K562 (cell line): ENCODE measurements at regions of chr4 and their contacts with region 1.

Region 1: GRCh38 chr4:140523857-140524742 is at the start of gene ELMOD2:
- DNase-seq: peak; percentile 97 to 98 (median 98)
- ATAC-seq: peak; percentile 100
- H3K4me3 ChIP-seq: peak within 1 kb of the TSS; percentile 96
- H3K27ac ChIP-seq: peak within 1 kb of the TSS; percentile 84
- H3K4me1 ChIP-seq: peaks cover 5 to 7% of the 10 kb centered on the region in 2 experiments; a peak in 3 of 5 replicates
- H3K27me3 ChIP-seq: no peaks in the 10 kb centered on the region
- CTCF ChIP-seq: peak; percentile 80 to 94 (median 87)
- EP300 ChIP-seq: no peak; the same call in 1 of the 2 replicates
- POLR2A ChIP-seq: peak; percentile 92
- RAD21 ChIP-seq: peak; percentile 33 to 37; a peak in 3 of 4 replicates
- polyA plus RNA-seq, gene ELMOD2: 11.0 to 13.1 TPM

Region 2: DNA sequence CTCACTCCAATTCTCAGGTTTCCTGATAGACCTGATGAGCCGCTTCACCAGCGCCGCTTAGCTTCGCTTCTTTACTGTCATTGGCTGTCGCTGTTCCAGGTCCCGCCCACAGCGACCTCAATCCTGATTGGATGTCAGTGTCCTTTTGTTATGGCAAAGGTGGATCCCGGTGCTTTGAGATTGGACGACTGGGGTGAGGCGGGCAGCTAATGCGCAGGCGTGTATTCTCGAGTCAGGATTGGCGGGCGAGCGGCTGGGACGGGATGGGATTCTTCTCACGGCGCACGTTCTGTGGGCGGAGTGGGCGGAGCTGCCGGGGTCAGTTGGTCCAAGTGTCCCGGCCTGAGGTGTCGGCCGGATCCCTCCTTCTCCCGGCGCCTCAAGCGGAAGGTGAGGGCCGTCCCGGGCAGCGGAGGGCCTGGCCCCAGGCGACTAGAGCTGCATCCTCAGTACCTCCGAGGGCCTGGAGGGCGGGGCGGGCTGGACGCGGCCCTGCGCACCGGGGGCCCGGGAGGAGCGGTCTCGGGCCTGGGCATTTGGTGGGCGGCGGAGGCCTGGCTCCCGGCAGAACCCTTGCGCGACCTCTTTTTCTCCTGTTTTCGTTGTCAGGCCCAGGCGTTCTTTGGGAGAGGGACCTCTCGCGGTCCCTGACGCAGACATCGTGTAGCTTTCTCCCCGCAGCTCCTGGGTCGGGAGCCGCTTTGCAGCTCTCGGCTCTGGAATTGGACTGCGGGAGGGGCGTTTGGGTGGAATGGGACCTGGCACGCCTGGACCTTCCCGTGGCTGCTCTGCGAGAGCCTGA is 150.6 kb before region 1 on chr4 and contains the start of gene SCOC:
- CTCF ChIA-PET with region 1: no interaction called
- POLR2A ChIA-PET with region 1: no interaction called
- in situ Hi-C with region 1: no loop called
- intact Hi-C with region 1: loop called (anchors 5 kb)
- DNase-seq: peak; percentile 98 to 99 (median 99)
- ATAC-seq: peak; percentile 97
- H3K4me3 ChIP-seq: peak within 1 kb of the TSS; percentile 89
- H3K27ac ChIP-seq: peak within 1 kb of the TSS; percentile 67
- H3K4me1 ChIP-seq: peaks cover 6 to 7% of the 10 kb centered on the region in 2 experiments; a peak in 3 of 5 replicates
- H3K27me3 ChIP-seq: no peaks in the 10 kb centered on the region
- CTCF ChIP-seq: no peak
- EP300 ChIP-seq: no peak
- POLR2A ChIP-seq: peak; percentile 87
- RAD21 ChIP-seq: no peak
- polyA plus RNA-seq, gene SCOC: 93.6 to 110 TPM

Region 3: GRCh38 chr4:140427106-140427961 is 96.8 kb before region 1 on chr4 and contains the start of gene CLGN:
- CTCF ChIA-PET with region 1: no interaction called
- POLR2A ChIA-PET with region 1: no interaction called
- in situ Hi-C with region 1: no loop called
- intact Hi-C with region 1: loop called (anchors 5 kb)
- DNase-seq: peak; percentile 49 to 86 (median 72)
- ATAC-seq: peak; percentile 97
- H3K4me3 ChIP-seq: peak within 1 kb of the TSS; percentile 59
- H3K27ac ChIP-seq: peak within 1 kb of the TSS; percentile 34; the same call in 2 of the 3 replicates
- H3K4me1 ChIP-seq: peaks cover 8 to 13% of the 10 kb centered on the region in 2 experiments; a peak in 4 of 5 replicates
- H3K27me3 ChIP-seq: no peaks in the 10 kb centered on the region
- CTCF ChIP-seq: peak; percentile 51 to 56 (median 54); a peak in 4 of 6 replicates
- EP300 ChIP-seq: no peak; the same call in 1 of the 2 replicates
- POLR2A ChIP-seq: no peak
- RAD21 ChIP-seq: peak in 1 of 2 experiments; percentile 20; a peak in 1 of 4 replicates
- polyA plus RNA-seq, gene CLGN: 2.7 to 2.8 TPM

Region 4: GRCh38 chr4:140609548-140610425 is 85.7 kb after region 1 on chr4:
- CTCF ChIA-PET with region 1: no interaction called
- POLR2A ChIA-PET with region 1: no interaction called
- in situ Hi-C with region 1: no loop called
- intact Hi-C with region 1: loop called (anchors 5 kb)
- DNase-seq: peak; percentile 22 to 54 (median 38)
- ATAC-seq: peak; percentile 86
- H3K4me3 ChIP-seq: no peak overlapping the region
- H3K27ac ChIP-seq: no peak overlapping the region
- H3K4me1 ChIP-seq: no peaks in the 10 kb centered on the region
- H3K27me3 ChIP-seq: peaks cover 3 to 4% of the 10 kb centered on the region in 2 experiments; a peak in 3 of 5 replicates
- CTCF ChIP-seq: peak; percentile 46 to 71 (median 54); a peak in 5 of 6 replicates
- EP300 ChIP-seq: no peak
- POLR2A ChIP-seq: no peak
- RAD21 ChIP-seq: peak; percentile 67 to 78